ENCODE measurements at regions of chr17 and their contacts with region 1.

Region 1: GRCh38 chr17:68172461-68172954 is 75.3 kb upstream of the AMZ2 start:
- DNase-seq: peak; percentile 78
- H3K4me3 ChIP-seq: no peak overlapping the region
- H3K27ac ChIP-seq: no peak overlapping the region
- H3K4me1 ChIP-seq: no peaks in the 10 kb centered on the region
- H3K27me3 ChIP-seq: no peaks in the 10 kb centered on the region
- CTCF ChIP-seq: peak; percentile 72 to 98 (median 92)
- EP300 ChIP-seq: no peak
- POLR2A ChIP-seq: no peak

Region 2: DNA sequence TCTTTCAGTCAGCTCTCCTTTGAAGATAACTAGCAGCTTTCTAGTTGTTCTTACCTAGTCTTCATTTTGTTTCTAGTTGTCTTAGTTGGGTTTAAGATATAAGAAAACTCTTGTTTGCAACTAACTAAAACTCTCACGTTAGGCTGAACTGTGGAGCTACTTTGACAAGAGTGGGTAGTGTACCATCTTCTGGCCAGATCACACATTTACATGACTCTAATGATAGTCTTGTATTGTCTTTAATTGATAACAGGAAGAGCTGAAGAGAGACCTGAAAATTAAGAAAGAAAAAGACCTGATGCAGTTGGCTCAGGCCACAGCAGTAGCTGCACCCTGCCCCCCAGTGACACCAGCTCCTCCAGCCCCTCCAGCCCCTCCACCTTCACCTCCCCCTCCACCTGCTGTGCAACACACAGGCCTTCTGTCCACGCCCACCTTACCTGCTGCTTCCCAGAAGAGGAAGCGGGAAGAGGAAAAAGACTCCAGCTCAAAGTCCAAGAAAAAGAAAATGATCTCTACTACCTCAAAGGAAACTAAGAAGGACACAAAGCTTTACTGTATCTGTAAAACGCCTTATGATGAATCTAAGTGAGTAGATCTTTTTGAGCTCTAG is 213.1 kb before region 1 on chr17:
- intact Hi-C with region 1: no loop called
- DNase-seq: no peak
- H3K4me3 ChIP-seq: no peak overlapping the region
- H3K27ac ChIP-seq: no peak overlapping the region
- H3K4me1 ChIP-seq: no peaks in the 10 kb centered on the region
- H3K27me3 ChIP-seq: no peaks in the 10 kb centered on the region
- CTCF ChIP-seq: no peak
- EP300 ChIP-seq: no peak
- POLR2A ChIP-seq: no peak

Region 3: GRCh38 chr17:68205251-68205807 is 32.8 kb after region 1 on chr17:
- intact Hi-C with region 1: loop called (anchors 1 kb)
- DNase-seq: peak; percentile 94
- H3K4me3 ChIP-seq: peak overlapping the region; percentile 66 to 96 (median 80)
- H3K27ac ChIP-seq: peak overlapping the region; percentile 88 to 89 (median 88)
- H3K4me1 ChIP-seq: peaks cover 0 to 30% (median 17%) of the 10 kb centered on the region in 4 donors
- H3K27me3 ChIP-seq: peaks cover 3 to 19% (median 16%) of the 10 kb centered on the region in 3 donors
- CTCF ChIP-seq: peak; percentile 44 to 96 (median 58)
- EP300 ChIP-seq: no peak
- POLR2A ChIP-seq: peak; percentile 28 to 53

Measured in sigmoid colon (tissue), 7 donors.